BJ (cell line): ENCODE measurements at regions of chr1 and their contacts with region 1.

Region 1: GRCh38 chr1:18820791-18821641 is 38.4 kb downstream of the TAS1R2 start:
- DNase-seq: no peak
- H3K4me3 ChIP-seq: no peak overlapping the region
- H3K27me3 ChIP-seq: peaks cover 4% of the 10 kb centered on the region
- CTCF ChIP-seq: peak; percentile 95

Region 2: DNA sequence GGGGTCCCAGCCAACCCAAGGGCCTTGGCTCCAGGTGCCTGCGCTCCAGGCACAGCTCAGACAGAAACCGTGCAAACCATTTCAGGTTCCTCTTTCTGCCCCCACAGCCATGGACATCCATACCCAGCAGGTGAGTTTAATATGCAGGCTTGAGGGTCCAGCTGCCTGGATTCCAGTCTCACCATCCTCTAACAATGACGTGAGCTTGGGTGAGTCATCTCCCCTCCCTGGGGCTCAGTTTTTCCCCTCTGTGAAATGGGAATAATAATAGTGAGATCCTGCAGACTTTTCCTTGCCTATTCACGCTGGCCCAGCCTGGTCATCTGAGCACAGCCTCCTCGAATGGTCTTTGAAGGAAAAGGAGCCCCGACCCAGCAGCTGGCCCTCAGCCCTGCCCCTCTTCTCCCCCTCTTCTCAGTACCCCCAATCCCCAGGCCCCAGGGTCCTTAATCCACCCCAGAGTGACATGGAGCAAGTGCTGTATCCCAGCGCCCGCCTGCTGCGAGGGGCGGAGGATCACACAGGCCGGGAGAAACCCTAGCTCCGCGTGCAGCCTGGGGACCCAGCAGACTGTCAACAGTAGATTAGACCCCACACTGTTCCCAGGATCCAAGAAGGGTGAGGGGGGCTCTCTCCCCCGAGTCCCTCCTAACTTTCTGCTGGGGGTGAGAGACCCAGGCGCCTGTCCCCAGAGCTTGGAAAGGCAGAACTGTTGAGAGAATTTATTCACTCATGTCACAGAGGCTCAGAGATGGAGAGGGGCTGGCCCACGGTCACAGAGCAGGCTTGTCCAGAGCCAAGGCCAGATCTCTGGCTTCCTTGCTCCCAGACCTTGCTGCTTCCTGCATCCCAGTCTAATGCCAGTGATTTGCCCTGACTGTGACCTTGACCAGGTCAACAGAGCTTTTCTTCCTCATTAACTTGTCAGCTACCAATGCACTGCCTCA is 10.8 kb before region 1 on chr1:
- CTCF ChIA-PET with region 1: interaction called, 11 read pairs
- POLR2A ChIA-PET with region 1: no interaction called
- DNase-seq: no peak
- H3K4me3 ChIP-seq: no peak overlapping the region
- H3K27me3 ChIP-seq: no peaks in the 10 kb centered on the region
- CTCF ChIP-seq: no peak